Activated B cell treated with CpG ODN at 0.5 μM for 24 hours (primary cell): ENCODE measurements at regions of chr3 and their contacts with region 1.

Region 1: DNA sequence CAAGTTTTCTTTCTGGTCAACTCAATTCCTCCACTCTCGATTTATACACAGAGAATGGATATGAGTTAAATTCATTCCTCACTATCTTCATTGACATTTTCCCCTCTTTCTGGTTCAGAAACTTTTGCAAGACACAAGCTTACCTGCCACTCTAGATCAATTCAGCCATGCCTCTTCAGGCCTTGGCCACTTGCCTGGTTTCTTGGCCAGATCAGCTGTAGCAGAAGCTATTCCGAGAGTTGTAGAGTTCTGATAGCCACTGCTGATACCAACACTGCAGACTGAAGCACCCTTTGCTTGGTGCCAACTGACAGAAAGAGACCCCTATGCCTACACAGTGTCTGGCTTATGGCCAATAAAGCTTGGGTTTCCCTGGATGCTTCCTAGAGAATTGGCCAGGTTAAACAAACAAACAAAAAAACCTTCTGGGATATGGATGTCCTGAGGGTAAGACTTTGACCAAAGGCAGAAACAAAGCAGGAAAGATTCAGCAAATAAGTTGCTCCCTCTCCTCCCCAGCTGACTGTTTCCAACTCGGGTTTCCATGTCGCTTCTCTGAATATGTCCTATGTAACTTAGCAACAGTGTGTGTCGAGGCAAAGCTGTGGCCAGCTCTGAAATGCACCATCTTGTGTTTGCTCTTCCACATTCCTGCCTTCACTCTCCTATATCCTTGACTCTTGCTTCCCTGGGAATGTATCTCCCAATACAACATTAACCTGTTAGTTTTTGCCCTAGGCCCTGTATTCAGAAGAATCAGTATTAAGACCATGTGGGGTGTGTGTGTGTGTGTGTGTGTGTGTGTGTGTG is 521.6 kb downstream of the EPHA3 start:
- DNase-seq: no peak
- ATAC-seq: no peak
- H3K4me3 Mint-ChIP-seq: no peak overlapping the region
- H3K27ac Mint-ChIP-seq: no peak overlapping the region
- H3K4me1 Mint-ChIP-seq: no peaks in the 10 kb centered on the region
- H3K27me3 Mint-ChIP-seq: no peaks in the 10 kb centered on the region
- CTCF ChIP-seq: no peak

Region 2: DNA sequence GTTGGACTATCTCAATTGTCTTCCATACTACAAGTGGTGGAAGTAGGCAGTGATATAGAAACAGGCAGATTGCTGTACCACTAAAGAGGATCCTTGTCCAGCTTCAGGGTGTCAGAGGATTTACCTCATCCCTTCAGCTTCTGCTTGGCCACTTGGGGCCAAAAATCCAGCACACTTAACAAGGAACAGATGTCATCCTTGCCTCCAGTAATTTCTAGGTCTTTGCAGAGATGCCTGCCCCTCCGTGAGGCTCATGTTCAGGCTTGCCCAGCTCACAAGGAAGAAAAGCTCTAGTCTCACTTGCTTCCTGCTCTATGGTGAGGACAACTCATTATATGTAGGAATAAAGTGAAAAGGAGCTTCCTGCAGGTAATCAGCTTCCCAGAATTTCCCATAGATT is 11.4 kb before region 1 on chr3:
- CTCF ChIA-PET with region 1: no interaction called
- POLR2A ChIA-PET with region 1: no interaction called
- intact Hi-C with region 1: loop called (anchors 1 kb)
- DNase-seq: no peak
- ATAC-seq: no peak
- H3K4me3 Mint-ChIP-seq: no peak overlapping the region
- H3K27ac Mint-ChIP-seq: no peak overlapping the region
- H3K4me1 Mint-ChIP-seq: no peaks in the 10 kb centered on the region
- H3K27me3 Mint-ChIP-seq: no peaks in the 10 kb centered on the region
- CTCF ChIP-seq: no peak

Region 3: GRCh38 chr3:89644716-89645115 is 15.7 kb after region 1 on chr3:
- CTCF ChIA-PET with region 1: no interaction called
- POLR2A ChIA-PET with region 1: no interaction called
- intact Hi-C with region 1: no loop called
- DNase-seq: no peak
- ATAC-seq: no peak
- H3K4me3 Mint-ChIP-seq: no peak overlapping the region
- H3K27ac Mint-ChIP-seq: no peak overlapping the region
- H3K4me1 Mint-ChIP-seq: no peaks in the 10 kb centered on the region
- H3K27me3 Mint-ChIP-seq: no peaks in the 10 kb centered on the region
- CTCF ChIP-seq: no peak